PC-9 (cell line): ENCODE measurements at regions of chr6 and their contacts with region 1.

Region 1: GRCh38 chr6:6704452-6705425 is 116.2 kb downstream of the LY86 start:
- DNase-seq: no peak
- H3K4me3 ChIP-seq: no peak overlapping the region
- H3K27ac ChIP-seq: no peak overlapping the region
- H3K4me1 ChIP-seq: peaks cover 2% of the 10 kb centered on the region
- H3K27me3 ChIP-seq: no peaks in the 10 kb centered on the region
- CTCF ChIP-seq: no peak

Region 2: GRCh38 chr6:7035837-7036249 is 331.1 kb after region 1 on chr6:
- CTCF ChIA-PET with region 1: interaction called, 20 read pairs
- POLR2A ChIA-PET with region 1: no interaction called
- intact Hi-C with region 1: no loop called
- DNase-seq: peak in 1 of 2 experiments; percentile 55
- H3K4me3 ChIP-seq: no peak overlapping the region
- H3K27ac ChIP-seq: no peak overlapping the region
- H3K4me1 ChIP-seq: peaks cover 7% of the 10 kb centered on the region; the same call in 1 of the 2 replicates
- H3K27me3 ChIP-seq: no peaks in the 10 kb centered on the region
- CTCF ChIP-seq: no peak